ENCODE measurements at regions of chr17 and their contacts with region 1.

Region 1: DNA sequence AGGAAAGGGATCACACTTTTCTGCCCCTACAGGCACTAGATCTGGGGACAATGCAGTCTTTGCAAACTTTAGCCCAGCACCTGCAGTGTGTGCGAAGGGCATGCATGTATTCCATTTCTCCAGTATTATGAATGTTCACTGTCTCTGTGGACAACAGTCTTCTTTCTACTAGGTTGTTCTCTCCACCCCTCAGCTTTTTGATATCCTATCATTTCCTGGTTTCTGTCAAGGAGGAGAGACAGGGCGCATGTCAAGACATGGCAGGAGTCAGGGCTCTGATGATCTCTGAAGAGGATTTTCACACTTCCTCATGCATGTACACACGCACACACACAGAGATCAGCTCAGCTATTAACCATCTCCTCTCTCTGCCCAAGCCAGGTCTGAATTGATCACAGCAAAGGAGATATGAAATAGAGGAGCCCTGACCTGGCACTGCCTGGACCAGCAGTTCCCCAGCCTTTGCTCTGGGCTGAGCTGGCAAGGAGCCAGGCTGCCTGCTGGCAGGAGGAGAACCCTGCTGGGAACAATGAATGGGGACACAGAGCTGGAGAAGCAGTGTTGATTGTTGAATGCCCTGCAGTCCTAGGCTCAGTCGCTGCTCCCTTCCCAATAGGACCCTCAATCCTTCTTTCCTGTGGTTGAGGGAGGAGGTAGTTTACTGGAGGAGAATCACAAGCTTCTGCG is 2.6 kb downstream of the GPR179 start:
- DNase-seq: peak in 2 of 5 donors; percentile 30 to 68
- H3K4me3 ChIP-seq: no peak overlapping the region
- H3K27ac ChIP-seq: no peak overlapping the region
- H3K4me1 ChIP-seq: no peaks in the 10 kb centered on the region
- H3K27me3 ChIP-seq: no peaks in the 10 kb centered on the region
- CTCF ChIP-seq: no peak

Region 2: DNA sequence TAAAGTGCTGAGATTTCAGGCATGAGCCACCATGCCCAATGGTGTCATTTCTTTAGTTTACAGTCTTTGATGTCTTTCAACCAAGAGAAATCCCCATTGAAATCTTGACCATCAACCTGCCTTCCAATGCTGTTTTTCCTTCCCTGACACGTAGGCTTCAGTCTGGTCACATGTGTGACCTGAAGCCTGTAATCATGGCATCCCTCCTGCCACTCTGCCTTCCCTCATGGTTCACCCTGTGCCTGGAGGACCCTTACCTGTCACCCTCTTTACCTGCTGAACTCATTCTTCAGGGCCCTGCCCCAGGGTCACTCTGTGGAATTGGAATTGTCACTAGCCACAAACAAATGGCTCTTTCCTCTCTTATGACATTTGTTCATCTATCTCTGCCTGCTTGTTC is 69.0 kb after region 1 on chr17:
- intact Hi-C with region 1: loop called (anchors 5 kb)
- DNase-seq: no peak
- H3K4me3 ChIP-seq: no peak overlapping the region
- H3K27ac ChIP-seq: no peak overlapping the region
- H3K4me1 ChIP-seq: no peaks in the 10 kb centered on the region
- H3K27me3 ChIP-seq: no peaks in the 10 kb centered on the region
- CTCF ChIP-seq: no peak

Region 3: GRCh38 chr17:38598536-38598935 is 257.4 kb after region 1 on chr17:
- intact Hi-C with region 1: no loop called
- DNase-seq: peak; percentile 66 to 91 (median 89)
- H3K4me3 ChIP-seq: no peak overlapping the region
- H3K27ac ChIP-seq: no peak overlapping the region
- H3K4me1 ChIP-seq: peaks cover 0 to 7% (median 0%) of the 10 kb centered on the region in 3 donors
- H3K27me3 ChIP-seq: no peaks in the 10 kb centered on the region
- CTCF ChIP-seq: no peak